ENCODE measurements at regions of chr6 and their contacts with region 1.

Region 1: DNA sequence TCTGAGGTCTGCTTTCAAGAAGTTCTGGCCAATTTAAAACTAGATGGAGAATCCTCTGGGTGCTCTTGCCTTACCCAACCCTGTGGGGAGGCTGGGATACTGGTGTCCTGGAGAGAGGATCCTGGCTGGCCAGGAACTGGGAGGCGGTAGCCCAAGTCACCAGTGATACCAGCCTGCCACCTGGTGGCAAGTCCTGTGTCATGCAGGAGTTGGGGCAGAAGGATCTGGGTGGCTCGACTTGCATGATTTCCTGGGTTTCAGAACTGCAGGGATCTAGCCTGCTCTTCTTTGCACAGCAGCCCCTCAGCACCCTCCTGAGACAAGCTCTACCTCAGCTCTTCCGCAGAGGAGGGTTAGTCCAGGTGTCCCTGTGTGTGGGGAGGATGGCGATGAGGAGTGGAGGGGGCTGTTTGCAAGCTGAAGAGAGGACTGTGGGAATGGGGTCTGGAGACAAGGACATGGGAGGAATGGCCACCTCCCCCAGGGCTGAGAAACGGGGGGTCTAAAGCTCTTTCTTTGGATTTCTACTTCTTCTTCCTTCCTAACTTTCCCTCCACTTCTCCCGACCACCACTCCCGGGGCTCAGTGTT is 4.2 kb downstream of the KCNK17 start:
- DNase-seq: peak in 4 of 5 donors; percentile 76 to 82 (median 80)
- H3K4me3 ChIP-seq: no peak overlapping the region
- H3K27ac ChIP-seq: no peak overlapping the region
- H3K4me1 ChIP-seq: peaks cover 0 to 5% (median 0%) of the 10 kb centered on the region in 3 donors
- H3K27me3 ChIP-seq: peaks cover 21% of the 10 kb centered on the region
- CTCF ChIP-seq: peak; percentile 95

Region 2: DNA sequence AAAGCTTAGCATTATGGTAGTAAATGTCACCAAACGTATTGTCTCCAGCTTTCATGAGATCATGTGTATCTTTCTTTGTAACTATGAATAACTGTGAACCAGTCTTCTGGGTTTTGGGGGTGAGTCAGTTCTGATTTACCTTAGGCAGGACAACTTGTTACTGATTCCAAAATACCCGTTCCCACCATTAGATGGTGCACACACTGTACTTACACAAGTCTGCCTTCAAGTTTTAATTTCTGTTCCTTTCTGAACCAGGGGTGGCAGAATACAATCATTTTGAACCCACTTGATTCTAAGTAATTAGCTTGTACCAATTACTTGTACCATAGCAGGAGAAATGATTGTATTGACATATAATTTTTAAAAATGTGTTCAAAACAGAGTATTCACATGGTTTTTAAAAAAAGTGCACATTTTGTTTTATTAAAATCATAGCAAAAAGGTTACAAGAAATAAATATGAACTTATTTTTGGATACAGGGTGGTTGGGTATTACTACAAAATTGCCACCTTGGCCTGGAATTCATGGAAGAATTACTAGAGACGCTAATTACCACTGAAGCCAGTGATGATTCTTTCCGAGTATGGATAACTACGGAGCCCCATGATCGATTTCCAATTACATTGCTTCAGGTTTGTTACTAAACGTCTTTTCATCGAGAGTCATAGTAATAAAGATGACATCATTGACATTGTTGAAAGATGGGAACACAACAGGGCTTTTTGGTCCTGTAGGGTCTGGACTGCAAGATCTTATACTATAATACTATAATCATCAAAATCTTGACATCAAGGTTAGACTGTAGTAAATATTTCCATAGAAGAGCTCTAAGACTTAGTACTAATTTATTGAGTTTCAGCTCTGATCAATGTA is 336.6 kb before region 1 on chr6:
- intact Hi-C with region 1: loop called (anchors 10 kb)
- DNase-seq: peak in 3 of 5 donors; percentile 18 to 73 (median 60)
- H3K4me3 ChIP-seq: no peak overlapping the region
- H3K27ac ChIP-seq: no peak overlapping the region
- H3K4me1 ChIP-seq: no peaks in the 10 kb centered on the region
- H3K27me3 ChIP-seq: no peaks in the 10 kb centered on the region
- CTCF ChIP-seq: peak; percentile 65

Measured in kidney (tissue), 22 donors.